AG04449 (cell line): ENCODE measurements at regions of chr20 and their contacts with region 1.

Region 1: GRCh38 chr20:32521780-32522525 is 63.2 kb downstream of the NOL4L start:
- DNase-seq: no peak
- H3K4me3 ChIP-seq: no peak overlapping the region
- CTCF ChIP-seq: peak; percentile 91

Region 2: GRCh38 chr20:32497589-32498224 is 24.2 kb before region 1 on chr20:
- CTCF ChIA-PET with region 1: interaction called, 51 read pairs
- POLR2A ChIA-PET with region 1: no interaction called
- DNase-seq: no peak
- H3K4me3 ChIP-seq: no peak overlapping the region
- CTCF ChIP-seq: no peak

Region 3: GRCh38 chr20:32509639-32510066 is 12.3 kb before region 1 on chr20:
- CTCF ChIA-PET with region 1: interaction called, 53 read pairs
- POLR2A ChIA-PET with region 1: no interaction called
- DNase-seq: no peak
- H3K4me3 ChIP-seq: no peak overlapping the region
- CTCF ChIP-seq: peak; percentile 7

Region 4: DNA sequence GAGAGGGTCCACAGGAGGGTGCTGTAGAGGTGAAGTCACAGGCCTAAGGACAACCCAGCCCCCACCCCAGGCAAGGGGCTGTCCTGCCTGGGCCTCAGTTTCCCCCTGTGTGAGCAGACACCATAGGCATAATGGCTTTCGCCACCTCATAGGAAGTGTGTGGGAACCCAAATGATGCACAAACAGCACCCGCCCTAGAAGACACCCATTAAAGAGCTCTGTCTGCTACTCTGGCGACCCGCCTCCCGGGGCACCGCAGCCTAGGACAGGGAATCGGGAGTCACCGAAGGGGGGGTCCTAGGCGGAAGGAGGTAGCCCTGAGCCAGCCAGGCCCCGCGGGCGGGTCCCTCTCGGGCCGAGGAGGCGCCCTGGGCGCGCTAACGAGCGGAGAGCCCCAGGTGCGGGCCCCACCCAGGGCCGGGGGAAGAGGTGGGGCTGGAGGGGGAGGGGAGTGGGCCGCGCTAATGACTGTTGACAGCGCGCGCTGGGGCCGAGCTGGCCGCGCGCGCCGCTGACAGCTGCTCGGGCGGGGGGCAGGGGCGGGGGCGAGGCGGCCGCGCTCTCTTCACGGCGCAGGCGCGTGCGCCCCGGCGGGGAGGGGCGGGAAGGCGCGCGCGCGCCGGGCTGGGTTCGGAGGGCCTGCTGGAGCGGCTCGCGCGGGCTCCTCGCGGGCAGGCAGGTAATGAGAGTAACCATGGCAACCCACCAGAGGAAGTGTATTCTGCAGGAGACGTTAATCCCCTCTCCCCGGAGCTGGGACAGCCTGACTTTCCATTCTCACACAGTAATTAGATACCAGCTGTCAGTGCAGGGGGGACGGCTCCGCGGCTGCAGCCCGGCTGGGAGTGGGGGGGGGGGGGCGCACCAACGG is 14.2 kb after region 1 on chr20:
- CTCF ChIA-PET with region 1: interaction called, 19 read pairs
- POLR2A ChIA-PET with region 1: no interaction called
- DNase-seq: no peak
- H3K4me3 ChIP-seq: peak overlapping the region; percentile 43
- CTCF ChIP-seq: no peak

Region 5: GRCh38 chr20:32626859-32627636 is 105.1 kb after region 1 on chr20:
- CTCF ChIA-PET with region 1: interaction called, 10 read pairs
- POLR2A ChIA-PET with region 1: no interaction called
- DNase-seq: no peak
- H3K4me3 ChIP-seq: no peak overlapping the region
- CTCF ChIP-seq: no peak

Region 6: GRCh38 chr20:32638848-32639247 is 116.9 kb after region 1 on chr20:
- CTCF ChIA-PET with region 1: interaction called, 653 read pairs
- POLR2A ChIA-PET with region 1: no interaction called
- DNase-seq: no peak
- H3K4me3 ChIP-seq: no peak overlapping the region
- CTCF ChIP-seq: no peak

Region 7: DNA sequence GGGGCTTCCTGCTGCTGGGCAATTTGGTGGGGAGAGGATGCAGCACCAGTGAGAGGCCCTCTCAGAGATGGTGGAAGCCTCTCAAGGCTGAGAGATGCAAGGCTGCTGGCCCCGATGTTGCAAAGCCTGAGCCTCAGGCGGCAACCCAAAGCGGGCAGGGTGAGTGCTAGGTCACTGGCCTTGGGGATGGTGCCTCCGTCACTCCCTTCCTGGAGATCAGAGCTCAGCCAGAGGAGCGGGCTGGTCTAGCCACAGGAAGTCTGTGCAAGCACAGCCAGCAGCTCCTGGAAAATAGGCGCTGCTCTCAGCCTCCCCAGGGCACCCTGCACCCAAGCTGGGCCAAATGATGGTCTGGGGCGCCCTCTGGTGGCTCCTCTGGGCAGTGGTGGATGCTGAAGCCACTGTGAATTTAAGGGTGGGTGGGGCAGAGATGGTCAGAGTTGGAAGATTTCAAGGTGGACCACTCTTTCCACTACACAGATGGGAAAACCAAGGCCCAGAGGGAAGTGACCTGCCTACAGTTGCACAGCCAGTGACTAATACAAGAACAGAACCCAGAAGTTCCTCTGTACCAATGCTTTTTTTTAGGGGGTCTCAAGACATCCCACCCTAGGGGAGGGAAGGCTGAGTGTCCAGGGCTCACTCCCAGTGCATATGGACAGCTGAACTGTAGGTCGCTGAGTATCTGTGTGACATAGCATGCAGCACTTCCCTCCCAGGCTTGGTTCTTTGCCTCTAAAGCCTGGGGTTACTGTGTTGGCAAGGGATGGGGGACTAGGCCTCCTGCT is 131.0 kb after region 1 on chr20:
- CTCF ChIA-PET with region 1: interaction called, 653 read pairs
- POLR2A ChIA-PET with region 1: interaction called, 3 read pairs
- DNase-seq: peak; percentile 14
- H3K4me3 ChIP-seq: no peak overlapping the region
- CTCF ChIP-seq: peak; percentile 95

Region 8: GRCh38 chr20:33229843-33230242 is 707.9 kb after region 1 on chr20:
- CTCF ChIA-PET with region 1: no interaction called
- POLR2A ChIA-PET with region 1: no interaction called
- DNase-seq: no peak
- H3K4me3 ChIP-seq: no peak overlapping the region
- CTCF ChIP-seq: no peak